Left cardiac atrium (tissue), 4 donors: ENCODE measurements at regions of chr15 and their contacts with region 1.

Region 1: GRCh38 chr15:77633134-77633912 is 611 bp upstream of the LINGO1 start:
- DNase-seq: peak; percentile 93
- ATAC-seq: peak; percentile 93 to 96

Region 2: GRCh38 chr15:77440378-77440999 is 192.8 kb before region 1 on chr15:
- intact Hi-C with region 1: no loop called
- DNase-seq: no peak
- ATAC-seq: no peak

Region 3: DNA sequence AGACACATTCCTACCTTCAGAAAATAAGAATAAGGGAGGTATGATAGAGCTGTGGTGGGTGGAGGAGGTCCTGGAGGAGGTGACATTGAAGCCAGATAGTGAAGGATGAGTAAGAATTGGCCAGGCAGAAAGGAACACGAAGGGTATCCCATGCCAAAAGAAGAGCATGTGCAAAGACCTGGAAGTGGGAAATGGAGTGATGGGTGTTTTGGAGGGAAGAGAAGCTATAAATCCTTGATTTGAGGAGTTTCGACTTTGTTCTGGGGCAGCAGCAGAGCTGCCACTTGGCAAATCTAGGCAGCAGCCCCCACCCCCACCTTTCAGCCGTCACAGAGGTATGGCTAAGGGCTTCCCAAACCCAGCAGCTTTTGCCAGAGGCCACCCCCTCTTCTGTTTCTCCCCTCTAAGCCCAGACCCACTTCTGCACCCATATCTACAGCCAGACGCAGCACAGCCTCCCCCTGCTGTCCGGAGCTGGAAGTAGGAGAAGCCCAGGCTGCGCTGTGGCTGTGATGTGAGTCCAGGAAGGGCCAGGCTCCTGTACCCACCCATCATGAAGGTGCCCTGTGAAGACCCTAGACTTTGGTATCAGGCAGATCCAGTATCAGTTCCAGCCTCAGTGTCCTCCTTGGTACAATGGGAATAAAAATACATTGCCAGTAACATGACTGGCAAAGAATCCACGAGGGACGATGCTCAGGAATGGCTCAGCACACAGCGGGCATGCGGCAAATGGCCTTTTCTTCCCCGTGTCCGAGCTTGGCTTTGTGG is 188.1 kb after region 1 on chr15:
- intact Hi-C with region 1: loop called (anchors 2 to 5 kb)
- DNase-seq: peak; percentile 64
- ATAC-seq: peak; percentile 74 to 78